ENCODE measurements at regions of chr4 and their contacts with region 1.

Region 1: DNA sequence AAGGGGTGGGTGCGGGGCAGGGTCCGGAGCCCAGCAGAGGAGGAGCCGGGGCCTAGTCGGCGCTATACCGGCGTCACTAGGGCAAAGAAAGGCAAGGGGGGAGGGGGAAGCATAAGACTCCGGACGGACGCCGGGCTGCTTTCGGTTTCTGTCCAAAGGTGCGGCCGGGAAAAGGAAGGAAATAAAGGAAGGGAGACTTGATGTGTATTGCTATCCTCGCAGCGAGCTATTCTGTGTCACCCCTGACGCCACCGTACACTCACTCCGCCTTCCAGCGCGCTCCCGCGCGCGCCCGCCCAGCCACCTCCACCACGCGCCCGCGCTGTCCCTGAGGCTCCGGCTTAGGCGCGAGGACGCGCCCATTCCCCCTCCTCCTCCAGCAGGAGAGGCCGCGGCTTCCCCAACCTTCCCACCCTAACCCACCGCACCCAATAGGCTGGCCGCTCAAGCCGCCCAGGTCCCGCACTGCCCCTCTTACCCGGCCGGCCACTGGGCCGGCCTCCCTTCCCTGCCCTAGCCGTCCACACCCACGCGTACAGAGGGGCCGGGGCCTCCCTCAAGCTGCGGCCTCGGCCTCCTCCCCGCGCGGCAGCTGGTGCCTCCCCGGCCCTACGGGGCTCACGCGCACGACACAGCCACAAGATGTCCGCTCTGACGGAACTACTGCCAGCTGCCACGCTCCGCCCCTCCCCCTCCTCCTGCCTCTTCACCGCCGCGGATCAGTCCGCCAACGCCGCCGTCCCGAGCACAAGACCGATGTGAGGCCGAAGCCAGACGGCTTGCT is at the start of gene UBE2D3:
- DNase-seq: peak; percentile 83 to 93 (median 89)
- H3K4me3 ChIP-seq: peak within 1 kb of the TSS; percentile 69 to 98 (median 90)
- H3K27ac ChIP-seq: peak within 1 kb of the TSS; percentile 97 to 100 (median 100)
- H3K27me3 ChIP-seq: no peaks in the 10 kb centered on the region
- CTCF ChIP-seq: peak in 39 of 56 donors; percentile 4 to 60 (median 29)
- total RNA-seq, gene UBE2D3: 177 to 322 (median 252) TPM

Region 2: GRCh38 chr4:102449751-102450352 is 377.2 kb before region 1 on chr4:
- intact Hi-C with region 1: loop called in 1 of 2 experiments (anchors 10 kb)
- DNase-seq: peak in 3 of 10 donors; percentile 30 to 68 (median 32)
- H3K4me3 ChIP-seq: no peak overlapping the region
- H3K27ac ChIP-seq: no peak overlapping the region
- H3K27me3 ChIP-seq: no peaks in the 10 kb centered on the region
- CTCF ChIP-seq: peak; percentile 46 to 84 (median 68)

Region 3: GRCh38 chr4:102620697-102621497 is 206.2 kb before region 1 on chr4:
- intact Hi-C with region 1: loop called (anchors 5 kb)
- DNase-seq: peak in 3 of 10 donors; percentile 34 to 60 (median 50)
- H3K4me3 ChIP-seq: peak overlapping the region in 30 of 59 donors; percentile 1 to 48 (median 22)
- H3K27ac ChIP-seq: peak overlapping the region in 52 of 59 donors; percentile 3 to 85 (median 66)
- H3K27me3 ChIP-seq: no peaks in the 10 kb centered on the region
- CTCF ChIP-seq: peak in 55 of 56 donors; percentile 52 to 86 (median 74)

Region 4: DNA sequence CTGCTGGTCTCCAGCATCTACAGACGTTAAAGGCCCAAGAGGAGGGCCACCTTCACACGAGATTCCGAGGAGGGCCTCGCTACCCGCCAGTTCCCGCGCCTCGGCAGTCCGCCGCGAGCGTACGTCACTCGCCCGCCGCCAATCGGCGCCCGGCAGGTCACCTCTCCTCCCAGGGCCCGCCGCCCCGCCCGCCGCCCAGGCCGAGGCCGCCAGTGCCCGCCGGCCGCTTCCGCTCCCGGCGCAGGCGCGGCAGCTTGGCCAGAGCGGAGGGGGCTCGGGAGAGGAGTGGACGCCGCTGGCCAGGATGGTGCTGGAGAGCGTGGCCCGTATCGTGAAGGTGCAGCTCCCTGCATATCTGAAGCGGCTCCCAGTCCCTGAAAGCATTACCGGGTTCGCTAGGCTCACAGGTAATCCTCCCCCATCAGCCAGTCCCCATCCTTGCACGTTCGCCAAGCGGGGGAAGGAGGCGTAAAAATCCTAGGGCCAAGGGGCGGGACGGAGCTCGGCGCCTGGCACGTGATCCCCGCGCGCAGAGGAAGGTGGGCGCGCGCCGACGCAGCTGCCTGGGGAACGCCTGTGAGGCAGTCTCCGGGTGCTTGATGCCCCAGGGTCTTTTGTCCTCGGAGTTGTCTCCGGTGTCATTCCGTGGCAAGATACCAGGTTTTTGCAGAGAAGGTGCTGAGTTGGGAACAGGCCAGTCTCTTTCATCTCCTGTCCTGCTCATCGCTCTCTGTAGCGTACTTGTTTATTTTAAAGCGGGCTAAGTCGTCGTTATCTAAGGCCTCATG is 41.9 kb after region 1 on chr4 and contains the start of gene CISD2:
- intact Hi-C with region 1: loop called (anchors 1 kb)
- DNase-seq: peak; percentile 84 to 98 (median 92)
- H3K4me3 ChIP-seq: peak within 1 kb of the TSS; percentile 60 to 97 (median 82)
- H3K27ac ChIP-seq: peak within 1 kb of the TSS; percentile 63 to 99 (median 96)
- H3K27me3 ChIP-seq: no peaks in the 10 kb centered on the region
- CTCF ChIP-seq: peak in 13 of 56 donors; percentile 0 to 51 (median 22)
- total RNA-seq, gene CISD2: 18.8 to 47.4 (median 33.4) TPM

Region 5: DNA sequence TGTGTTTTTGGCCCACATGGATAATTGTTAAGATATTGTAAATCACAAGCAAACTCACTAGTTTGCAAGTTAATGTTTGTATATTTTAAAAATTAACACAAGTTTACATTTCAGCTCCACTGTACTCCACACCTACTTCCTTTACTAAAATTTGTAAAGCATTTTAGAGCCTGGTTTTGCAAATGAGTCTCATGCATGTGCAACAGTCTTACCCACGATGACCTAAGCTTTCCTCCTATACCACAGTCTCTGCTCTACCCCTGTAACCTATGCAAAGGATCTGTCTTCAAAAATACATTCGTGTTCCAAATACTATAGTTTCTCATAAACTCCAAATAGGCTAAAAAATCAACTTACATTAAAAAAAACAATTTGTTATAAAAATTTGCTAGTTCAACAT is 262.4 kb after region 1 on chr4:
- intact Hi-C with region 1: loop called in 1 of 2 experiments (anchors 10 kb)
- DNase-seq: no peak
- H3K4me3 ChIP-seq: no peak overlapping the region
- H3K27ac ChIP-seq: no peak overlapping the region
- H3K27me3 ChIP-seq: no peaks in the 10 kb centered on the region
- CTCF ChIP-seq: no peak